ENCODE measurements at regions of chr2 and their contacts with region 1.

Region 1: GRCh38 chr2:75627895-75628504 is 18.6 kb upstream of the MRPL19 start:
- DNase-seq: no peak
- H3K4me3 ChIP-seq: no peak overlapping the region
- H3K27me3 ChIP-seq: peaks cover 8% of the 10 kb centered on the region
- CTCF ChIP-seq: peak; percentile 98

Region 2: GRCh38 chr2:75459565-75460310 is 168.3 kb before region 1 on chr2:
- CTCF ChIA-PET with region 1: interaction called, 113 read pairs
- POLR2A ChIA-PET with region 1: no interaction called
- DNase-seq: peak; percentile 62
- H3K4me3 ChIP-seq: no peak overlapping the region
- H3K27me3 ChIP-seq: peaks cover 21% of the 10 kb centered on the region
- CTCF ChIP-seq: no peak

Region 3: GRCh38 chr2:75560768-75561565 is 67.0 kb before region 1 on chr2 and contains the start of gene EVA1A:
- CTCF ChIA-PET with region 1: interaction called, 13 read pairs
- POLR2A ChIA-PET with region 1: no interaction called
- DNase-seq: peak; percentile 39
- H3K4me3 ChIP-seq: peak within 1 kb of the TSS; percentile 78
- H3K27me3 ChIP-seq: no peaks in the 10 kb centered on the region
- CTCF ChIP-seq: no peak
- polyA plus RNA-seq, gene EVA1A: 30.2 and 41.0 TPM in 2 replicates

Region 4: DNA sequence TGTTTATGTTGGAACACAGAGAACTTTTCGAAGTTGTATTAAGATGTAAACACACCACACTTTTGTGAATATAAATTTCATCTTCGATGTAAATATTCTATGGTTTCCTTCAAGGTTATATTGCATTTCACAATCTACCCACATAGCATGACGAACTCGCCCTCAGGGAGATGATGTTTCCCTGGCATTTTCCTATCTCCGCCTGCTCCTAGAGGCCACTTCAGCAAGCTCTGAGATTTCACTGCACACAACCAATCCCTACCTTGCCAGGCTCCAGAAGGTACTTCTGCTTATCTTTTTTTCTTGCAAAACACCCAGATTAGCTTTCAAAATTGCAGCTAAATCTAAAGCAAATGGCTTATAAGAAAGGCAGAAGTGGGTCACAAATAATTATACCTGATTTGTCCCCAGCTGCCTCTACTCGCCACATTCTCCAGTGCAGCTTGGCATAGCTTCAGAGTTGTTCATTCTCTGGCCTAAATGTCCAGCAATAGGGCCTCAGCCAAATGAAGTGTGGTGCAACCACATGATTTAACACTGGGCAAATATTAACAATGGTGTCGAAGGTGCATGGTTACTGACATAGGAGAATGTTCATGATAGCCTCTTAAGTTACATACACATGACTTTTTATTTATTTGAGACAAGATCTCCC is 13.8 kb before region 1 on chr2:
- CTCF ChIA-PET with region 1: interaction called, 29 read pairs
- POLR2A ChIA-PET with region 1: no interaction called
- DNase-seq: no peak
- H3K4me3 ChIP-seq: no peak overlapping the region
- H3K27me3 ChIP-seq: peaks cover 1% of the 10 kb centered on the region
- CTCF ChIP-seq: no peak

Region 5: DNA sequence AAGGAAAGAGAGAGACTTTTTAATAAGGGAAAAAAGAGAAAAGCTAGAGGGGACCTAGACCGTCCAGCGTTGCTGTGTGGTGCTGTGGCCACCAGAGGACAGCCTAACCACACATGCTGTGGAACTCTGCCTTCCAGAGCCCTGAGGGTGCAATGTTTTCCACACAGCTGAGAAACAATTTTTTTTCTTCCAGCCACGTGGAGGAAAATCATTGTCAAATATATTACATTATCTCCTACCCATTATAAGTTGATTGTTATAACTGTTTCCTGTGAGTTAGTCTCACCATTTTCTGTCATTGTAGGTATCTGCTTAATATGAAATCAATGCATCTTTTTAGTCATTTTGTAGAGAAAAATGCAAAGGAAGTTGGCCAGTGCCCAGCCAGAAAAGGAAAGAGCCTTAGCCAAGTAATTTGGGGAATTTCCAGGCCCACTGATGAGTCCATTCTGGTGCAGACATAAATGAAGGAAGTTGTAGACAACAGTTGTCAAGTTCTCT is 12.7 kb after region 1 on chr2:
- CTCF ChIA-PET with region 1: interaction called, 27 read pairs
- POLR2A ChIA-PET with region 1: no interaction called
- DNase-seq: peak; percentile 24
- H3K4me3 ChIP-seq: no peak overlapping the region
- H3K27me3 ChIP-seq: peaks cover 8% of the 10 kb centered on the region
- CTCF ChIP-seq: peak; percentile 100

Measured in BJ (cell line).